ENCODE measurements at regions of chr19 and their contacts with region 1.

Region 1: DNA sequence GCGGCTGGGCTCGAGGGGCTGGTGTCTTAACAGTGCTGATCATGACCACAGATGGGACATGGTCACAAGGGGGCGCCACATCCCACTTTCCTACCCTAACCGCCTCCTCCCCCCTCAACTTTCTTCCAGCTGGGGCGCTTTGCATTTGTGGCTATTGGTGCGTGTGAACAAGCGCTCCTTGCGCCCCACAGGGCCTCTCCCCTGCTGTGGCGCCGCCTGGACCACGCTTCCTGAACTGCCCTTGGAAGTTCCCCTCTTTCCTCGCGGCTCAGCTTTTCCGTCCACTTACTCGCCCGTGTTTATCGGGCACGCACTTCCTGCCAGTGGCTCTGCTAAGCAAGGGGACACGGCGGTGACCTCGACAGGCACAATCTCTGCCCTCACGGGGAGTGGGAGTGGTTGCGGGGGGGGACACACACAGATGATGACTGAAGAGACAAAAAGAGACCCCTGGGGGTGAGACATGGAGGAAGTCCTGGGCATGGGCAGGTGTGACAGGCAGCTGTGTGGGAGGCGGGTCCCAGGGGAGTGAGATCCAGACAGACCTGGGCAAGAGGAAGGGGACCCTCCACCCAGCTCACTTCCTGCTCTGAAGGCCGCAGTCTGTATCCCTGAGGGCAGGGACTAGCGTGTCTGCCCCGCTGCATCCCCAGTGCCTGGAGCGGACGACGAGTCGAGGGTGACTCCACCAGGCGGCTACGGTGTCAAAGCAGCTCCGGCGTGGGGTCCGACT is 40.3 kb downstream of the ZNF787 start:
- DNase-seq: peak; percentile 12
- H3K4me3 ChIP-seq: peak overlapping the region; percentile 49
- CTCF ChIP-seq: peak; percentile 71

Region 2: DNA sequence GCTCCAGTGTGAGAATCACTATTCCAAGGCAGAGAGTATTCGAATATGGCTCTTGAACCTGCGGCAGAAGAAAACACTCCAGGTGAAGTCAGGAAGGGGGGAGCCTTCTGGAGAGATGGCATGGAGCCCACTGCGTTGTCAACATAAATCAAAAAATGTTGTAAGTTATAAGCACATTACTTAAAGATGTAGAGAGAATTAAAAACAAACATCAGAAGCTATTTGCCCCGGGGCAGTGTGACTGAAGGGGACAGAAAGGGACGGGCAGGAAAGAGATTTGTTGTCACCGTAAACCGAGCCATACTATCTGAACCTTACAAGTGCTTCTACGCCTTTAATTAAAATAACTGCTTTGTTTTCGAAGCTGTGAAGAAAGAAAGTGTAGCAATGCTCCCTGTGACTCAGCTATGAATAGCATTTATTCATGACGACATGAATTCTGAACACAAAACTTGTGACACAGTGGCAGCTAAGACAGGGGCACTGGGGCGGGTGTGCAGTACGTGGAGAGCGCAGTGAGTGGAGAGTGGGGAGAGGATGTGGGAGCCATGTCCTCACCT is 10.2 kb after region 1 on chr19:
- CTCF ChIA-PET with region 1: interaction called, 25 read pairs
- POLR2A ChIA-PET with region 1: no interaction called
- DNase-seq: no peak
- H3K4me3 ChIP-seq: no peak overlapping the region
- CTCF ChIP-seq: no peak

Region 3: DNA sequence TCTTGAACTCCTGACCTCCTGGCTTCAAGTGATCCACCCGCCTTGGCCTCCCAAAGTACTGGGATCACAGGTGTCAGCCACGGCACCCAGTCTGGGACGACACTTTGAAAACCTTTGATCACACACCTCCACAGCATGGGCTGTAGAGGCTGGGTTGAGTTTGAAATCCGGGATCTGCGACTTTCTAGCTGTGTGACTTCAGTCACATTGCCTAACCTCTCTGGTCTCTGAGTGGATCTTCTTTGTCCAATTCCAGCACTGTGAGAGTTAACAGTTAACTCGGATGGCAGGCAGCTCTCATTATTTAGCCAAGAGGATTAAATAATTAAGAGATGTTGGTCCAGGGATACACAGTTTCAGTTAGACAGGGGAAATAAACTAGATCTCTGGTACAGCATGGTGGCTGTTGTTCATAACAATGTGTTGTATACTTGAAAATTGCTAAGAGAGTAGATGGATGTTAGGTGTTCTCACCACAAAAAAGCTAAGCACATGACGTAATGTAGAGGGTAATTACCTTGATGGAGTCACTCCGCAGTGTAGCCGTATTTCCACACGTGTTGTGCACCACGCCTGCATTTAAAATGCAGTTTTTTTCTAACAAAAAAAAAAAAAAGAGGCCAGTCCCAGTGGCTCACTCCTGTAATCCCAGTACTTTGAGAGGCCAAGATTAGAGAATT is 96.9 kb after region 1 on chr19:
- CTCF ChIA-PET with region 1: interaction called, 202 read pairs
- POLR2A ChIA-PET with region 1: no interaction called
- DNase-seq: no peak
- H3K4me3 ChIP-seq: no peak overlapping the region
- CTCF ChIP-seq: no peak

Region 4: GRCh38 chr19:56314562-56315077 is 233.8 kb after region 1 on chr19 and contains the start of gene ZSCAN5A:
- CTCF ChIA-PET with region 1: interaction called, 10 read pairs
- POLR2A ChIA-PET with region 1: no interaction called
- DNase-seq: peak; percentile 62
- H3K4me3 ChIP-seq: peak within 1 kb of the TSS; percentile 95
- CTCF ChIP-seq: no peak

Region 5: GRCh38 chr19:56350416-56351045 is 269.7 kb after region 1 on chr19:
- CTCF ChIA-PET with region 1: interaction called, 15 read pairs
- POLR2A ChIA-PET with region 1: no interaction called
- DNase-seq: no peak
- H3K4me3 ChIP-seq: no peak overlapping the region
- CTCF ChIP-seq: peak; percentile 79